T-cell (primary cell): ENCODE measurements at regions of chr2 and their contacts with region 1.

Region 1: DNA sequence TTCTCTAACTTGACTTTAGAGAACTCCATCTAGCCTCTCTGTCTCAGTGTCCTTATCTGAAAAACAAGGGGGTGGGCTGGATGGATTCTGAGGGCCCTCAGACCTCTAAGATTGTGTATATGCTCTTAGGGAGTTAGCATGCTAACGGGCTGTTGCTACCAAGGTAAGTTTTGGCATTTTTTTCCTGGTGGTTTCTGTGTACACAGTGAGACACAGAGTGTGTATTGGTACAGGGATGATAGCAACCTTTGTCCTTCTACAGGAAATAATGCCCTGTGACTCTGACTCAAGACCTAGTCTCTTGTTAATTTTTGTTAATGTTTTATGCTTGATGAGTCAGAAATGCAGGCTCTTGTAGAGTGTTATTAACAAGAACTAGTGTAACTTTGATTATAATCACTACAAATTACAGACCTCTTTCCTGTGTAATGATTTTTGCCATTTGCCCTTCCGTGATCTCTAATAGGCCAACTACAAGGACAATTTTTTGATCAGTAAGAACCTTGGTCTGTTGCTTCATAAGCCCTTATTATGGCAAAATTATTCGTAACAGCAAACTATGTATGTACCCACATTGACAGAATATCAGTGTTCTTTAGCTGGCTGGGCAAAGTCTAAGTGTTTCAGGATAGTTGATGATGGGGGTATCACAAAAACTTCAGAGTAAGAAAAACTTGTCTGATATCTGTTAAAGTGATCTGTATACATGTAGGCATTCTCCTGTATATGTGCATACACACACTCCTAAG is 89.7 kb downstream of the SPTBN1 start:
- DNase-seq: no peak
- ATAC-seq: no peak
- H3K4me3 ChIP-seq: no peak overlapping the region
- H3K4me3 Mint-ChIP-seq: no peak overlapping the region
- H3K27ac ChIP-seq: no peak overlapping the region
- H3K27ac Mint-ChIP-seq: no peak overlapping the region
- H3K4me1 ChIP-seq: no peaks in the 10 kb centered on the region
- H3K4me1 Mint-ChIP-seq: peaks cover 0 to 3% (median 2%) of the 10 kb centered on the region in 3 donors
- H3K27me3 ChIP-seq: peaks cover 0 to 3% of the 10 kb centered on the region in 2 experiments
- H3K27me3 Mint-ChIP-seq: no peaks in the 10 kb centered on the region

Region 2: GRCh38 chr2:53403792-53404413 is 1142.0 kb before region 1 on chr2:
- CTCF ChIA-PET with region 1: no interaction called
- POLR2A ChIA-PET with region 1: no interaction called
- DNase-seq: no peak
- ATAC-seq: no peak
- H3K4me3 ChIP-seq: no peak overlapping the region
- H3K4me3 Mint-ChIP-seq: no peak overlapping the region
- H3K27ac ChIP-seq: no peak overlapping the region
- H3K27ac Mint-ChIP-seq: no peak overlapping the region
- H3K4me1 ChIP-seq: no peaks in the 10 kb centered on the region
- H3K4me1 Mint-ChIP-seq: no peaks in the 10 kb centered on the region
- H3K27me3 ChIP-seq: no peaks in the 10 kb centered on the region
- H3K27me3 Mint-ChIP-seq: no peaks in the 10 kb centered on the region

Region 3: DNA sequence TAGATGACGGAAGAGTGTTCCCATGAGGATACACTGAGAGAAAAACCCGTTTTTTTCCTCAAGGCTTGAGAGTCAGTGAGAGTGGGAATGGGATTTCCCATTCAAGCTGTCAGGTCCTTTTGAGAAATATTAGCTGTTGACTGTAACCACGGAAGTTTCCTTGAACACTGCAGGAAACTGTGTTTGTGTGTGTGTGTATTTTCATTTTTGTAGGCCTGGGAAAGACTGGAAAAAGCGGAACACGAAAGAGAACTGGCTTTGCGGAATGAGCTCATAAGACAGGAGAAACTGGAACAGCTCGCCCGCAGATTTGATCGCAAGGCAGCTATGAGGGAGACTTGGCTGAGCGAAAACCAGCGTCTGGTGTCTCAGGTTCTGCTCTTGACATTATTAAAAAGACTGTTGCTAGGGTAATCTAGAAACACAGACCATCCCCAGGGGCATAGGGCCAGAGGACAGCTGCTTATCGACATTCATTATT is 78.8 kb after region 1 on chr2:
- CTCF ChIA-PET with region 1: no interaction called
- POLR2A ChIA-PET with region 1: interaction called in 1 of 2 experiments, 10 read pairs
- DNase-seq: no peak
- ATAC-seq: no peak
- H3K4me3 ChIP-seq: no peak overlapping the region
- H3K4me3 Mint-ChIP-seq: no peak overlapping the region
- H3K27ac ChIP-seq: no peak overlapping the region
- H3K27ac Mint-ChIP-seq: no peak overlapping the region
- H3K4me1 ChIP-seq: peaks cover 0 to 3% of the 10 kb centered on the region in 2 experiments
- H3K4me1 Mint-ChIP-seq: peaks cover 6 to 16% (median 11%) of the 10 kb centered on the region in 3 donors
- H3K27me3 ChIP-seq: no peaks in the 10 kb centered on the region
- H3K27me3 Mint-ChIP-seq: no peaks in the 10 kb centered on the region

Region 4: GRCh38 chr2:54691445-54692135 is 145.7 kb after region 1 on chr2:
- CTCF ChIA-PET with region 1: no interaction called
- POLR2A ChIA-PET with region 1: no interaction called
- DNase-seq: no peak
- ATAC-seq: no peak
- H3K4me3 ChIP-seq: no peak overlapping the region
- H3K4me3 Mint-ChIP-seq: no peak overlapping the region
- H3K27ac ChIP-seq: no peak overlapping the region
- H3K27ac Mint-ChIP-seq: no peak overlapping the region
- H3K4me1 ChIP-seq: peaks cover 0 to 2% of the 10 kb centered on the region in 2 experiments
- H3K4me1 Mint-ChIP-seq: peaks cover 0 to 2% (median 0%) of the 10 kb centered on the region in 3 donors
- H3K27me3 ChIP-seq: peaks cover 0 to 3% of the 10 kb centered on the region in 2 experiments
- H3K27me3 Mint-ChIP-seq: peaks cover 0 to 4% of the 10 kb centered on the region in 2 donors